ENCODE measurements at regions of chr1 and their contacts with region 1.

Region 1: DNA sequence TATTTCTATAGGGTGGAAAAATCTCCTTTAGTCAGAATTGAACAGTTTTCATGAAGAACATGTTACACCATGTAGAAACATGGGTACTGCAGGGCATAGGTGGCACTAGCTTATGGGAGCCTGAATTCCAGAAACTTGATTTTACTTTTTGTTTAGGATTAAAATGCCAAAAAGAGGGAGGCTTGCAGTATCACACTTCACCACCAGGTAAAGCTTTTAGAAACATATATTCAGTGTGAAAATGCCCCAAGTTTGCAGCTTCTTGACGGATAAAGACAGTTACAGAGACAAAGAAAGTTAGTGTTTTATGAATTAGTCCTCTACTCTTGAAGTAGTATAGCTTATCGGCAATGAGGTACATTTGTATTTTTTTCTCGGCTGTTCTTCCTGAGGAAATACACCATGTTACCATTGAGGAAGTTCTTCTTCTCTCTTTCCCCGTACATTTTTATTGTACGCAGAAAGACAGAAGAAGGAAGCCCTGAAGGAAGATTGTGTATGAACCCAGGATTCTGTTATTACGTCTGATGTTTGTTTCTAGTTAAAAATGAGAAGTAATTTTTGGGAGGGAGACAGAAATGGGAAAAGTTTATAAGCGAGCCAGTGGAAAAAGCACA is 66.1 kb downstream of the PBX1 start:
- DNase-seq: no peak
- H3K4me3 ChIP-seq: no peak overlapping the region
- H3K27ac ChIP-seq: no peak overlapping the region
- H3K27me3 ChIP-seq: no peaks in the 10 kb centered on the region
- CTCF ChIP-seq: peak; percentile 49

Region 2: GRCh38 chr1:164601399-164602374 is 23.4 kb before region 1 on chr1:
- CTCF ChIA-PET with region 1: interaction called, 10 read pairs
- POLR2A ChIA-PET with region 1: no interaction called
- DNase-seq: no peak
- H3K4me3 ChIP-seq: no peak overlapping the region
- H3K27ac ChIP-seq: no peak overlapping the region
- H3K27me3 ChIP-seq: no peaks in the 10 kb centered on the region
- CTCF ChIP-seq: no peak

Region 3: GRCh38 chr1:164635803-164636731 is 11.0 kb after region 1 on chr1:
- CTCF ChIA-PET with region 1: interaction called, 14 read pairs
- POLR2A ChIA-PET with region 1: interaction called, 5 read pairs
- DNase-seq: no peak
- H3K4me3 ChIP-seq: no peak overlapping the region
- H3K27ac ChIP-seq: no peak overlapping the region
- H3K27me3 ChIP-seq: no peaks in the 10 kb centered on the region
- CTCF ChIP-seq: no peak

Measured in AG04450 (cell line).